Caco-2 (cell line): ENCODE measurements at regions of chr6 and their contacts with region 1.

Region 1: DNA sequence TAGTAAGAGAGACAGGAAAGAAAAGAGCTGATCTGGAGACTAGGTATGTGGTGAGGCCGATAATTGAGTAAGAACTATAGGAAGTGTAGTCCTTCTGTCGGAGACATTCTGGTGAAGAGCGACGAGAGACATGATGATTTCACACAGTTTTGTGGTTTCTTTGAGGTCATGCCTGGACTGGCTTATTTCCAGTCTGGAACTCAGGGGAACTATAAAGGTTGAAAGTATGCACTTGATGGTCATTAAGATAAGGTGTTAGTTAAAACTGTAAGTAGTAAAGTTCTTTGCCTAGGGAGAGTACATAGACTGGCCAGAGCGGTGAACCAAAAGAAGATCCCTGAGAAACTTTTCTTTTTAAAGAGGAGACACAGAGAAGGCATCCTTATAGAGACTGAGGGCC is 68.8 kb downstream of the RFX6 start:
- DNase-seq: no peak
- H3K4me3 ChIP-seq: no peak overlapping the region
- H3K4me3 Mint-ChIP-seq: no peak overlapping the region
- H3K27ac Mint-ChIP-seq: peak overlapping the region; percentile 37
- H3K4me1 ChIP-seq: peaks cover 45% of the 10 kb centered on the region
- H3K4me1 Mint-ChIP-seq: peaks cover 51% of the 10 kb centered on the region
- H3K27me3 ChIP-seq: no peaks in the 10 kb centered on the region
- H3K27me3 Mint-ChIP-seq: no peaks in the 10 kb centered on the region
- CTCF ChIP-seq: no peak

Region 2: GRCh38 chr6:116876635-116877611 is 68.9 kb before region 1 on chr6 and contains the start of gene RFX6:
- CTCF ChIA-PET with region 1: interaction called, 4 read pairs
- POLR2A ChIA-PET with region 1: no interaction called
- intact Hi-C with region 1: loop called (anchors 1 kb)
- DNase-seq: peak; percentile 38 to 51
- H3K4me3 ChIP-seq: peak within 1 kb of the TSS; percentile 53
- H3K4me3 Mint-ChIP-seq: peak within 1 kb of the TSS; percentile 88
- H3K27ac Mint-ChIP-seq: no peak within 1 kb of the TSS
- H3K4me1 ChIP-seq: peaks cover 4% of the 10 kb centered on the region; the same call in 1 of the 2 replicates
- H3K4me1 Mint-ChIP-seq: no peaks in the 10 kb centered on the region
- H3K27me3 ChIP-seq: peaks cover 1% of the 10 kb centered on the region
- H3K27me3 Mint-ChIP-seq: peaks cover 3% of the 10 kb centered on the region
- CTCF ChIP-seq: no peak
- total RNA-seq, gene RFX6: 1.3 and 1.5 TPM in 2 replicates

Region 3: DNA sequence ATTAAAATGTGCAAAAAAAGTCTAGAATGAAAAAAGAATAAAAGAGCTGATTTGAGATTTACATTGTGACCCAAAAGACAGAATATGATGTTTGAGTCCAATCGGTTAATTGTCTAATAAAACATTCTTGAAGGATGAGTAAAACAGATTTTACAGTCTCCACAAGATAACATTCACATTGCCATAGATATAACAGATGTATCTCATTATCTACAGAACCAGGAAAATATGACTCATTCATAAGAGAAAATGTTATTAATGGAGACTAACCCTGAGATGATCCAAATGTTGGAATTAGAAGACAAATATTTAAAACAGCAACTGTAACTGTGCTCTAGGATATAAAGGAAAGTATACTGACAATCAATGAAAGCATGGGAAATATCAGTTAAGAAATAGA is 73.0 kb after region 1 on chr6:
- CTCF ChIA-PET with region 1: no interaction called
- POLR2A ChIA-PET with region 1: no interaction called
- intact Hi-C with region 1: no loop called
- DNase-seq: no peak
- H3K4me3 ChIP-seq: no peak overlapping the region
- H3K4me3 Mint-ChIP-seq: no peak overlapping the region
- H3K27ac Mint-ChIP-seq: no peak overlapping the region
- H3K4me1 ChIP-seq: no peaks in the 10 kb centered on the region
- H3K4me1 Mint-ChIP-seq: no peaks in the 10 kb centered on the region
- H3K27me3 ChIP-seq: no peaks in the 10 kb centered on the region
- H3K27me3 Mint-ChIP-seq: peaks cover 4% of the 10 kb centered on the region
- CTCF ChIP-seq: no peak

Region 4: DNA sequence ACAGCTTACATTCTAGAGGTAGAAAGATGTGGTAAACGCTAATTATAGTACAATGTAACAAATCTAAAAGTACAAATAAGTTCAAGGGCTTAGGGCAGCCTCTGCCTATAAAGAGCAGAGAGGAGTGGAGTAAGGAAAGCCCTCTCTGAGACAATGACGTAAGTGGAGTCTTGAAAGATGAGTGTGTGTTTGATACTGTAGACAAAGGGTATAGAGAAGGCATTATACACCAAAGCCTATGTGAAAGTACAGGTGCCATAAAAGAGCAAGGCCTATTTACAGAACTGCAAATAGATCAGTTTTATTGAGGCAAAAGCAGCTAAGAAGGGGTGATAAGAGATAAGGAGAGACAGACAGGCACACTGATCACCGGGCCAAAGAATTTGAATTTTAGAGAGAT is 645.6 kb after region 1 on chr6:
- CTCF ChIA-PET with region 1: no interaction called
- POLR2A ChIA-PET with region 1: no interaction called
- intact Hi-C with region 1: loop called (anchors 5 kb)
- DNase-seq: peak; percentile 34 to 65
- H3K4me3 ChIP-seq: no peak overlapping the region
- H3K4me3 Mint-ChIP-seq: peak overlapping the region; percentile 15
- H3K27ac Mint-ChIP-seq: peak overlapping the region; percentile 39
- H3K4me1 ChIP-seq: peaks cover 24% of the 10 kb centered on the region
- H3K4me1 Mint-ChIP-seq: peaks cover 14% of the 10 kb centered on the region
- H3K27me3 ChIP-seq: no peaks in the 10 kb centered on the region
- H3K27me3 Mint-ChIP-seq: no peaks in the 10 kb centered on the region
- CTCF ChIP-seq: no peak